ENCODE measurements at regions of chr15 and their contacts with region 1.

Region 1: GRCh38 chr15:50718700-50719125 is 32.1 kb upstream of the TRPM7 start:
- DNase-seq: no peak
- ATAC-seq: no peak
- H3K4me3 ChIP-seq: no peak overlapping the region
- H3K27ac ChIP-seq: no peak overlapping the region
- H3K4me1 ChIP-seq: no peaks in the 10 kb centered on the region
- H3K27me3 ChIP-seq: no peaks in the 10 kb centered on the region

Region 2: DNA sequence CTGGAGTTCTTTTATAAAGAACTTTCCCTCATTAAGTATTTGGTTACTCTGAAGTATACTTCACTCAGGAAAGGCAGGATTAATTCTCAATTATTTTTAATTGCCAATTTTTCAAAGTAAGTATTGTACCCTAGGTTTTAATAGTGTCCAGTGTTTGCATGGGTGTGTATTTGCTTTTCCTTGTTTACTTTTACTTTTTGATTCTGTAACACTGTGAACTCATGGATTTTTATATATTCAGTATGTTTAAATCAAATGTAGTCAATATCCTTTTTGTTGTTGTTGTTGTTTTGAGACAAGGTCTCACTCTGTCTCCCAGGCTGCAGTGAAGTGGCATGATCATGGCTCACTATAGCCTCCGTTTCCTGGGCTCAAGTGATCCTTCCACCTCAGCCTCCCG is 116.3 kb after region 1 on chr15:
- intact Hi-C with region 1: loop called in 1 of 2 experiments (anchors 5 kb)
- DNase-seq: no peak
- ATAC-seq: no peak
- H3K4me3 ChIP-seq: no peak overlapping the region
- H3K27ac ChIP-seq: no peak overlapping the region
- H3K4me1 ChIP-seq: no peaks in the 10 kb centered on the region
- H3K27me3 ChIP-seq: no peaks in the 10 kb centered on the region

Measured in aorta (tissue), 5 donors.